ENCODE measurements at regions of chr12 and their contacts with region 1.

Region 1: GRCh38 chr12:1650260-1650977 is 21.4 kb downstream of the WNT5B start:
- DNase-seq: no peak
- ATAC-seq: no peak
- H3K4me3 ChIP-seq: no peak overlapping the region
- H3K27ac ChIP-seq: no peak overlapping the region
- H3K4me1 ChIP-seq: peaks cover 0 to 4% of the 10 kb centered on the region in 2 experiments; a peak in 1 of 4 replicates
- H3K27me3 ChIP-seq: peaks cover 25% of the 10 kb centered on the region; the same call in 1 of the 2 replicates
- CTCF ChIP-seq: no peak
- POLR2A ChIP-seq: no peak
- RAD21 ChIP-seq: no peak

Region 2: DNA sequence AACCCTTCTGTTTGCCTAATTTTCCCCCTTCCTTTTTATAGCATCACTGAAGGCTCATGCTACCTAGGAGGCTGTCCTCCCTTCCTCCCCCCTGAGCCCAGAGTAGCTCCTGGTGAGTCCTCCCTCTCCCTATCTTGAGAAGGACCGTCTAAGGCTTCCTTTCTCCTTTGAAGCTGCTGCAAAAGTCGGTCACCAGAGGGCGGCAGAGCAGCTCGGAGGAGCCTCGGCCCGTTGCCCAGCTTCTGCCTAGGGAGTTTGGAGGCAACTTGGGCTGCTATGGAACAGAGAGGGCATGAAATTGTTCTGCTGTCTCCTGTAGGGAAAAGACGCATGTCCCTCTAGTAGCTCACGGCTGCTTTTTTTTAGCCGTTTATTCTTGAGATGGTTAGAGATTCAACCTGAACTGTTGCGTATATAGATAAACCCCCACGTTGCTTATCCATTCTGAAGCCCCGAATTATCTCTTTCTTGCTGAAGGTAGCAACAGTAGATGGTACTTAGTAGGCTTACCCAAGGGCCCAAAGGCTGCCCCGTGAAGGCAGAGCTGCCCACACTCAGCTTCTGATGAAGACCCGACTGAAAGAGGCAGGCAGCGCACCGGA is 15.7 kb before region 1 on chr12:
- CTCF ChIA-PET with region 1: interaction called, 10 read pairs
- POLR2A ChIA-PET with region 1: no interaction called
- RAD21 ChIA-PET with region 1: no interaction called
- intact Hi-C with region 1: no loop called
- DNase-seq: peak; percentile 63
- ATAC-seq: peak; percentile 81
- H3K4me3 ChIP-seq: no peak overlapping the region
- H3K27ac ChIP-seq: no peak overlapping the region
- H3K4me1 ChIP-seq: peaks cover 0 to 15% of the 10 kb centered on the region in 2 experiments; a peak in 3 of 4 replicates
- H3K27me3 ChIP-seq: no peaks in the 10 kb centered on the region
- CTCF ChIP-seq: peak; percentile 78 to 93 (median 90)
- POLR2A ChIP-seq: no peak
- RAD21 ChIP-seq: peak; percentile 85

Region 3: DNA sequence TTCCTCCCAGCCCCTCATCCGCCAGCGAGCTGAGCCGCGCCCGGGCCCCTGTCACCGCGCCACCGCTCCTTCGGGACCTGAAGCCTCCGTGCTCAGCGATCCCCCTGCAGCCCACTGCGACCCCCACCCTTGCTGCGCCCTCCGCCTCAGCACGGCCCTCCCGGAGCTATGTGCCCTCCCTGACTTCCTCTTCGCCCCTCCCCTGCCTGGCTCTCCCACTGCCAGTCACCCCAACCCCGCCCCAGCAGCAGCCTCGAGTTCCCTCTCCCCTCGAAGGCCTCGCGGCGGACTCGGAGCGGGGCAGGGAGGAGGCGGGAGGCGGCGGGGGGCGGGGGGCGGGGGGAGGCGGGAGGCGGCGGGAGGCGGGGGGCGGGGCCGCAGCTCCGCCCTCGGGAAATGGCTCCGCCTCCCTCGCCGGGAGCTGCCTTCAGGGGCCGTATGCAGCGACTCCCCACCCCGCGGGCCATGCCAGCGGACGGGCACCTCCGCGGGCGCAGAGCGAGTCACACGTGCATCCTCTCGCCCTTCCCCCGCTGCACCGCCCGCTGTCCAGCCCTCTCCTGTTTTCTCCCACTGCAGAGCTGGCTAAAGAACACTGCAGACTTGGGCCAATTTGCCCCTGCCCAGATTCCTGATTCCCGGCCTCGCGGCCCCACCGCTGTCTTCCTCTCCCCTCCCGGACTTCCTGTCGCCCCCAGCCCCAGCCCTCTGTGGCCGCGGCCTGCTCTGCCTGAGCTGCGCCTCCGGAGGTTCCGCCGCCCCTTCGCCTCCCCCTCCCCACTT is 11.3 kb after region 1 on chr12:
- CTCF ChIA-PET with region 1: interaction called, 12 read pairs
- POLR2A ChIA-PET with region 1: interaction called, 3 read pairs
- RAD21 ChIA-PET with region 1: interaction called in 1 of 2 experiments, 4 read pairs
- intact Hi-C with region 1: no loop called
- DNase-seq: peak; percentile 89
- ATAC-seq: peak; percentile 91
- H3K4me3 ChIP-seq: peak overlapping the region in 1 of 2 experiments; percentile 11; a peak in 1 of 4 replicates
- H3K27ac ChIP-seq: peak overlapping the region; percentile 46; the same call in 1 of the 2 replicates
- H3K4me1 ChIP-seq: peaks cover 0 to 28% of the 10 kb centered on the region in 2 experiments; a peak in 2 of 4 replicates
- H3K27me3 ChIP-seq: no peaks in the 10 kb centered on the region
- CTCF ChIP-seq: no peak
- POLR2A ChIP-seq: peak; percentile 61
- RAD21 ChIP-seq: no peak

Region 4: DNA sequence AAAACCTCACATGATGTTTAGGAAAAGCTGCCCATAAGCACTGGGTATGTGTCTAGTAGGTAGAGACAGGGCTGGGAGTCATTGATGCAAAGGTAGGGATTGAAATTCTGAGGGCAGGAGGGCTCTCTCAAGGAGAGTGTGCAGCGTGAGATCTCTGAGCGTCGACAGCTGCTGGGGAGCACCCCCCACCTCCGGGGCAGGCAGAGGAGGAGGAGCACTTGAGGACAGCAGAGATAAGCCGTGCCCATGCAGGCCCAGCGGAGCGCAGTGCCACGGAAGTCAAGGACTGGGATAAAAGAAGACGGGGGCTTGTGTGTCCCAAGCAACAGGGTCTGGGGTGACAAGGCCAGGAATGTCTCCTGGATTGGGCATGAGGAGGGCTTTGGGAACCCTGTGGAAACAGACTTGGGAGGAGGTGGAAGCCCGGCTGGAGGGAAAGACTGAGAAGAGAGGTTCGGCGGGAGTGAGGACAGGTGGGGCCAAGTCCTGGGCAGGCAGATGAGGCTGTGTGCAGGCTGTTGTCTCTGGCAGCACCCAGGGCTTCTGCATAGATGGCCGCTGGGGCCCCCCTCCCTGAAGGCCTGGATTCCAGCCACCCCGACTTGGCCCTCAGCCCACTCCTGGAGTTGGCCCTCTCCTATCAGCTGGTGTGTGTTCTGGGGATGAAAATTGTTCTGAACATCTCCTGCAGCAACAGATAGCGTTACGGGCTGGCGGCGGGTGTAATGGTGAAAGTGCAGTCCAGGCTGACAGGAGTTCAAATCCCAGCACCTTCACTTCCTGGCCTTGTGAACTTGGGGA is 266.2 kb after region 1 on chr12:
- CTCF ChIA-PET with region 1: no interaction called
- POLR2A ChIA-PET with region 1: no interaction called
- RAD21 ChIA-PET with region 1: no interaction called
- intact Hi-C with region 1: no loop called
- DNase-seq: no peak
- ATAC-seq: no peak
- H3K4me3 ChIP-seq: no peak overlapping the region
- H3K27ac ChIP-seq: no peak overlapping the region
- H3K4me1 ChIP-seq: peaks cover 0 to 7% of the 10 kb centered on the region in 2 experiments; a peak in 1 of 4 replicates
- H3K27me3 ChIP-seq: no peaks in the 10 kb centered on the region
- CTCF ChIP-seq: no peak
- POLR2A ChIP-seq: no peak
- RAD21 ChIP-seq: no peak

Region 5: GRCh38 chr12:1939801-1940607 is 289.6 kb after region 1 on chr12:
- CTCF ChIA-PET with region 1: interaction called, 41 read pairs
- POLR2A ChIA-PET with region 1: interaction called, 4 read pairs
- RAD21 ChIA-PET with region 1: interaction called in 1 of 2 experiments, 4 read pairs
- intact Hi-C with region 1: loop called (anchors 1 kb)
- DNase-seq: peak; percentile 52
- ATAC-seq: peak; percentile 95
- H3K4me3 ChIP-seq: no peak overlapping the region
- H3K27ac ChIP-seq: no peak overlapping the region
- H3K4me1 ChIP-seq: no peaks in the 10 kb centered on the region
- H3K27me3 ChIP-seq: no peaks in the 10 kb centered on the region
- CTCF ChIP-seq: peak; percentile 78 to 98 (median 89); a peak in 5 of 6 replicates
- POLR2A ChIP-seq: no peak
- RAD21 ChIP-seq: peak; percentile 87

Region 6: DNA sequence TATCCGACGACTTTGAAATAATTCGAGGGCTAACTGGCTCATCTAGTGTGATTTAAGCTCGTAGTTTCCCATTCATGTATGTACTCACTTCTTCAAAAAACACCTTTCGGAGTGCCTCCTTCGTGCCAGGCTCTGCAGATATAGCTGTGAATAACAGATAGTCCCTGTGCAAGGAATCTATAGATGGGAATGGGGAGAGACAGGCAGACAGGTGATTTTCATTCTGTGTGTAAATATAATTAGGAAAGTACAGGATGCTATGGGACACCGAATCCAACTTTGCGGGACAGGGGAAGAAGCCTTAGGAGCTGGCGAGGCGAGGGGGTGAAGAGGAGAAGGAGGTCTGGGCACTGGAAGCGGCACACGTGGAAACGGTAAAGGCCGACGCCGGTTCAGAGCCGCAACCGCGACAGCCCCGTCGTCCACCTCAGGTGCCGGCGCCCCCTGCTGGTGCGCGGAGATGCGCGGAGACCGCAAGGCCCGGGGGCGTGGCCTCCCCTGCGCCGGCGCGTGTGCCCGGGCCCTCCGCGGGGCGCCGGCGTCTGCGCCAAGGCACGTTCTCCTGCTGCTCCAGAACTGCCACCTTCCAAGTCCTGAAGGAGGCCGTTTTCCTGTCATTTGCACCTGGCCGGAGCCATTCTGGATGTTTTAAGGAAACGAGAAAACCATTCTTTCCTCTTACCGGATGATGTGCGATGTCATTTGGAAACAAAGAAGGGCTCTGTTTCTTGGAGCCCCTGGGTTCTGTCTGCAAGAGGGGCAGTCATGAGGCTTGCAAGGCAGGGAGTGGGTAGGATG is 384.4 kb after region 1 on chr12:
- CTCF ChIA-PET with region 1: interaction called, 3 read pairs
- POLR2A ChIA-PET with region 1: no interaction called
- RAD21 ChIA-PET with region 1: no interaction called
- intact Hi-C with region 1: loop called (anchors 5 kb)
- DNase-seq: peak; percentile 60
- ATAC-seq: peak; percentile 98
- H3K4me3 ChIP-seq: peak overlapping the region; percentile 30 to 47
- H3K27ac ChIP-seq: no peak overlapping the region
- H3K4me1 ChIP-seq: peaks cover 5 to 11% of the 10 kb centered on the region in 2 experiments
- H3K27me3 ChIP-seq: peaks cover 38% of the 10 kb centered on the region; the same call in 1 of the 2 replicates
- CTCF ChIP-seq: peak; percentile 35 to 85 (median 82); a peak in 5 of 6 replicates
- POLR2A ChIP-seq: peak; percentile 67
- RAD21 ChIP-seq: peak; percentile 64